GM12878 (cell line): ENCODE measurements at regions of chr3 and their contacts with region 1.

Region 1: DNA sequence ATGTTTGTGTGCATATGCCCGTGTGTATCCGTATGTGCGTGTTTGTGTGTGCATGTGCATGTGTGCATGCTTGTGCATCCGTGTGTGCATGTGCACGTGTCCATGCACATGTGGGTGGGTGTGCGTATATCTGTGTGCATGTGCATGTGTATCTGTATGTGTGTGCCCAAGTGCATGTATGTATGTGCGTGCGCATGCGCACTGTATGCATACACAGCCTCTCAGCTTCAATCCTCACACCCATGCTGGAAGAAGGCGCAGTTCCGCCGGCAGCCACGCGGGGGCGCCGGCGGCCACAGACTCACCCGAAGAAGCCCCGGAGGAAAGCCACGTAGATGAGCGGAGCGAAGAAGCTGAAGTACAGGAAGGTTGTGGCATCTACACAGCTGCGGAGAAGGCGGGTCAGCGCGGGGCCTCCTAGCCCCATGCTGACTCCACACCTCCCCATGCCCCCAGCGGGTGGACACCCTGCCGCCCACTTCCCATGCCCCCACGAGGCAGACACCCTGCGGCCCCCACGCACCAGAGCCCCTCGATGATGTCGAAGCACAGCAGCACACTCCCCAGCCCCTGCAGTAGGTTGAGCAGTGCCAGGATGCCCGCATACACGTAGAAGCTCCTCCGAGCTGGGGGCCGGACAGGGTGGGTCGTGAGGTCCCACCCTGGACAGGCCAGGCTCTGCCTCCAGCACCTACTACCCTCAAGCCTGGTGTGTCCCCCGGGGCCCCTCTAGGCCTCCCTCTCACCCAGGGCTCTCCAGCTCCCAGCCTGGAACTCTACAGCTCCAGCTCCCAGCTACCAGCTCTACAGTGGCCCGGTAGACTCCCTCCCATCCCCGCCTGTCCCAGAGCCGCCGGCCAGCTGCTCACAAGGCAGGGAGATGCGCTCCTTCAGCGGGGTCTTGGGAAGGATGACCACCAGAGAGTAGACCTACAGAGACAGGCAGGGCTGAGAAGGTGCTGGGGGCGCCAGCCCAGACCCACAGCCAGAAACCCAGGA is 15.4 kb downstream of the TPRA1 start:
- DNase-seq: peak; percentile 69
- ATAC-seq: peak; percentile 98
- H3K4me3 ChIP-seq: no peak overlapping the region
- H3K27ac ChIP-seq: no peak overlapping the region
- H3K4me1 ChIP-seq: no peaks in the 10 kb centered on the region
- H3K27me3 ChIP-seq: no peaks in the 10 kb centered on the region
- CTCF ChIP-seq: peak; percentile 99 to 100 (median 100); a peak in 5 of 6 replicates
- EP300 ChIP-seq: no peak
- POLR2A ChIP-seq: peak; percentile 27
- RAD21 ChIP-seq: peak; percentile 80

Region 2: DNA sequence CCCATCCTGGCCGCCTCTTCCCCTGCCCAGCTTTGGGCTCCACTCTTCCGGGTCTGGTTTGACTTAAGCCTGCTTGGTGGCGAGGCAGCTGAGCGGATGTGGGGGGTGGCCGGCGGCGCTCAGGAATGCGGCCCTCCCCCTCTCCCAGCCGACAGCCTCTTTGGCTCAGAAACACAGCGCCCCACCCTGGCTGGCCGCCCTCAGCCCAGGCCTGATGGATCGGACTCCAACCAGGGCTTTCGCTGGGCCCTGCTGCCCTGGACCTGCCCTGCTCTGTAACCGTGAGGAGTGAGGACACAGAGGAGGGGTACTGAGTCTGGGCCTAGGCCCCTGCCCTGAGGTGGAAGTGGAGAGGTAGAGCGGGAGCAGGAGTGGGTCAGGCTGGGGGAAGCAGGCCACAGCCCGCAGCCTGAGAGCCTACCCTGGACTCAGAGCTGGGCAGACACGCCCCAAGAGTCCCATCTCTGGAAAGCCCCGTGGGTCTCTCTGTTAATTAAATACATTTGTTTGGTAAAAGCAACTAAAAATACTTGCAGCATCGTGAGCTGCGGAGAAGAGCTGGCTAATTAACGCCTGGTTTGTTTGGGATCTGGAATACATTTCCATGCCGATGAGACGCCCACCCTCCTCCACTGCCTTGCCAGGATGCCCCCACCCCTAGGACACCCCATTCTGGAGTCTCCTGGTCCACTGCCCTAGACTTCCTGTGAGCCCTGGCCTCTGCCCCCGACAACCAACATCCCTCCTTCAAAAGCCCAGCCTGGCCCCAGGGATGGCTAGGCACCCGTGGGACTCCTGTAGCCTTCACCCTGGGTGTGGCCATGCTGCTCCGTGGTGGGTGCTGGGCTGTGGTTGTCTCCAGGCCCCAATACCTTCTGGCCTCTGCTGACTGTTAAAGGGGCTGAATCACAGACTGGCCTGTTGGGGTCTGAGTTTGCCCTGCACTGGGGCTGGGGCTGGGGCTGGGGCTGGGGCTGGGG is 572.7 kb before region 1 on chr3:
- CTCF ChIA-PET with region 1: no interaction called
- POLR2A ChIA-PET with region 1: no interaction called
- RAD21 ChIA-PET with region 1: no interaction called
- SMC1A ChIA-PET with region 1: no interaction called
- in situ Hi-C with region 1: no loop called
- intact Hi-C with region 1: no loop called
- DNase-seq: no peak
- ATAC-seq: peak; percentile 79
- H3K4me3 ChIP-seq: no peak overlapping the region
- H3K27ac ChIP-seq: peak overlapping the region; percentile 61; the same call in 1 of the 2 replicates
- H3K4me1 ChIP-seq: peaks cover 7% of the 10 kb centered on the region
- H3K27me3 ChIP-seq: no peaks in the 10 kb centered on the region
- CTCF ChIP-seq: peak in 2 of 3 experiments; percentile 21 to 25; a peak in 2 of 6 replicates
- EP300 ChIP-seq: no peak
- POLR2A ChIP-seq: peak; percentile 51; the same call in 1 of the 2 replicates
- RAD21 ChIP-seq: no peak

Region 3: GRCh38 chr3:127590593-127591477 is 15.7 kb after region 1 on chr3 and contains the start of gene TPRA1:
- CTCF ChIA-PET with region 1: interaction called, 43 read pairs
- POLR2A ChIA-PET with region 1: interaction called, 3 read pairs
- RAD21 ChIA-PET with region 1: interaction called, 11 read pairs
- SMC1A ChIA-PET with region 1: interaction called, 9 read pairs
- in situ Hi-C with region 1: no loop called
- intact Hi-C with region 1: no loop called
- DNase-seq: peak; percentile 90
- ATAC-seq: peak; percentile 84
- H3K4me3 ChIP-seq: peak within 1 kb of the TSS; percentile 99
- H3K27ac ChIP-seq: peak within 1 kb of the TSS; percentile 94
- H3K4me1 ChIP-seq: peaks cover 22% of the 10 kb centered on the region
- H3K27me3 ChIP-seq: no peaks in the 10 kb centered on the region
- CTCF ChIP-seq: peak; percentile 26 to 72 (median 42); a peak in 5 of 6 replicates
- EP300 ChIP-seq: no peak
- POLR2A ChIP-seq: peak; percentile 58; the same call in 1 of the 2 replicates
- RAD21 ChIP-seq: peak; percentile 33
- polyA plus RNA-seq, gene TPRA1: 1.8 to 3.6 TPM

Region 4: GRCh38 chr3:127598841-127599570 is 23.8 kb after region 1 on chr3:
- CTCF ChIA-PET with region 1: interaction called, 33 read pairs
- POLR2A ChIA-PET with region 1: interaction called, 3 read pairs
- RAD21 ChIA-PET with region 1: interaction called, 11 read pairs
- SMC1A ChIA-PET with region 1: interaction called, 9 read pairs
- in situ Hi-C with region 1: no loop called
- intact Hi-C with region 1: no loop called
- DNase-seq: no peak
- ATAC-seq: no peak
- H3K4me3 ChIP-seq: peak overlapping the region; percentile 94
- H3K27ac ChIP-seq: peak overlapping the region; percentile 91
- H3K4me1 ChIP-seq: peaks cover 18% of the 10 kb centered on the region
- H3K27me3 ChIP-seq: no peaks in the 10 kb centered on the region
- CTCF ChIP-seq: no peak
- EP300 ChIP-seq: no peak
- POLR2A ChIP-seq: no peak
- RAD21 ChIP-seq: no peak

Region 5: DNA sequence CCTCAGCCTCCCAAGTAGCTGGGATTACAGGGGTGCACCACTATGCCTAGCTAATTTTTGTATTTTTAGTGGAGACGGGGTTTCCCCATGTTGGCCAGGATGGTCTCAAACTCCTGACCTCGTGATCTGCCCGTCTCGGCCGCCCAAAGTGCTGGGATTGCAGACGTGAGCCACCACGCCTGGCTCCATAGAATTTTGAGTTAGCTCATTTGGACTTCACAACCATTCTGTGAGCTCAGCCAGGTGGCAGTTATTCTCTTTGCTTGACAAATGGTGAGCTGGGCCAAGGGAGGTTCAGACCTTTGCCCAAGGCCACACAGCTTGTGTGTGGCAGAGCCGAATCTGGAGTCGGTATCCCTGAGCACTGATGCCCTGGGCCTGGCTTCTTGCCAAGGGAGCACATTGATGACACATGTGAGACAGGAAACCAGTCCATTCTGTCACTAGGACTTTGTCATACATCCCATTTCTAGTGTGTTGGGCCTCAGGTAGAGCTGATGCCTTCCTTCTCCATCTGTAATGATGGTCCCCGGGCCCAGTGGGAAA is 71.4 kb after region 1 on chr3:
- CTCF ChIA-PET with region 1: interaction called, 17 read pairs
- POLR2A ChIA-PET with region 1: no interaction called
- RAD21 ChIA-PET with region 1: interaction called, 8 read pairs
- SMC1A ChIA-PET with region 1: interaction called, 6 read pairs
- in situ Hi-C with region 1: no loop called
- intact Hi-C with region 1: no loop called
- DNase-seq: no peak
- ATAC-seq: no peak
- H3K4me3 ChIP-seq: no peak overlapping the region
- H3K27ac ChIP-seq: no peak overlapping the region
- H3K4me1 ChIP-seq: no peaks in the 10 kb centered on the region
- H3K27me3 ChIP-seq: no peaks in the 10 kb centered on the region; a peak in 1 of 4 replicates
- CTCF ChIP-seq: no peak
- EP300 ChIP-seq: no peak
- POLR2A ChIP-seq: no peak
- RAD21 ChIP-seq: no peak

Region 6: DNA sequence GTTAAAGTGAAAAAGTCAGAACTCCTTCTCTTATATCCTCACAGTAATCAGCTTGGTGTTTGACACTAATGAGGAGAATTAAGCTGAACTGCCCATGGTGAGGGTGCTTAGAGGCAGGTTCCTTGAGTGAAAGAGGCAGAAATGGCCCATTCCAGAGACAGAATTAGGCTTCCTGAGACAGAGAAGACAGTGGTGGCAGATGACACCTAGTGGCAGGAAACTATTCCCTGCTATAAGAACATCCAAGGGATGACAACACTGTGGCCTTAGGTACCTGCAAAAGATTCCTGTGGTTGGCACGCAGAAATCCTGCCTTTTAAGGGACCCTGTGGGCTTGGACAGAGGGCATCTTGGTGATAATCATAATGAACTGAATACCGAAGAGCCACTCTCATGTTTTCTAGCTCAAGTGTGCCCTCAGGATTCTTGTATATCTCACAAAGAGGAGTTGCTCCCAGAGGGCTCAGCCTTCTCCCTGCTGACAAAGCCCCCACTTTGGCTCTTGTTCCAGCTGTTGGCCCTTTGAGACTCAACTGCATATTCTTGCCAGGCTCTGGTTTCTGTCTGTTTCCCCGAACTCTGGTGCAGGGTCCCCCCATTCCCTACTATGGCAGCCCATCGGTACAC is 395.9 kb after region 1 on chr3:
- CTCF ChIA-PET with region 1: interaction called, 9 read pairs
- POLR2A ChIA-PET with region 1: no interaction called
- RAD21 ChIA-PET with region 1: interaction called, 14 read pairs
- SMC1A ChIA-PET with region 1: interaction called, 12 read pairs
- in situ Hi-C with region 1: no loop called
- intact Hi-C with region 1: loop called (anchors 1 kb)
- DNase-seq: peak; percentile 26
- ATAC-seq: peak; percentile 98
- H3K4me3 ChIP-seq: no peak overlapping the region
- H3K27ac ChIP-seq: no peak overlapping the region
- H3K4me1 ChIP-seq: no peaks in the 10 kb centered on the region
- H3K27me3 ChIP-seq: no peaks in the 10 kb centered on the region
- CTCF ChIP-seq: peak; percentile 72 to 93 (median 75); a peak in 5 of 6 replicates
- EP300 ChIP-seq: no peak
- POLR2A ChIP-seq: no peak
- RAD21 ChIP-seq: peak; percentile 94